Dorsolateral prefrontal cortex (tissue), 120 donors: ENCODE measurements at regions of chr1 and their contacts with region 1.

Region 1: GRCh38 chr1:180881806-180882509 is 30.7 kb upstream of the KIAA1614 start:
- DNase-seq: no peak
- H3K4me3 ChIP-seq: no peak overlapping the region
- H3K27ac ChIP-seq: peak overlapping the region in 40 of 59 donors; percentile 1 to 77 (median 47)
- H3K27me3 ChIP-seq: no peaks in the 10 kb centered on the region
- CTCF ChIP-seq: peak in 55 of 56 donors; percentile 53 to 89 (median 71)

Region 2: GRCh38 chr1:180849036-180849775 is 32.8 kb before region 1 on chr1:
- intact Hi-C with region 1: no loop called
- DNase-seq: no peak
- H3K4me3 ChIP-seq: no peak overlapping the region
- H3K27ac ChIP-seq: no peak overlapping the region
- H3K27me3 ChIP-seq: no peaks in the 10 kb centered on the region
- CTCF ChIP-seq: no peak

Region 3: DNA sequence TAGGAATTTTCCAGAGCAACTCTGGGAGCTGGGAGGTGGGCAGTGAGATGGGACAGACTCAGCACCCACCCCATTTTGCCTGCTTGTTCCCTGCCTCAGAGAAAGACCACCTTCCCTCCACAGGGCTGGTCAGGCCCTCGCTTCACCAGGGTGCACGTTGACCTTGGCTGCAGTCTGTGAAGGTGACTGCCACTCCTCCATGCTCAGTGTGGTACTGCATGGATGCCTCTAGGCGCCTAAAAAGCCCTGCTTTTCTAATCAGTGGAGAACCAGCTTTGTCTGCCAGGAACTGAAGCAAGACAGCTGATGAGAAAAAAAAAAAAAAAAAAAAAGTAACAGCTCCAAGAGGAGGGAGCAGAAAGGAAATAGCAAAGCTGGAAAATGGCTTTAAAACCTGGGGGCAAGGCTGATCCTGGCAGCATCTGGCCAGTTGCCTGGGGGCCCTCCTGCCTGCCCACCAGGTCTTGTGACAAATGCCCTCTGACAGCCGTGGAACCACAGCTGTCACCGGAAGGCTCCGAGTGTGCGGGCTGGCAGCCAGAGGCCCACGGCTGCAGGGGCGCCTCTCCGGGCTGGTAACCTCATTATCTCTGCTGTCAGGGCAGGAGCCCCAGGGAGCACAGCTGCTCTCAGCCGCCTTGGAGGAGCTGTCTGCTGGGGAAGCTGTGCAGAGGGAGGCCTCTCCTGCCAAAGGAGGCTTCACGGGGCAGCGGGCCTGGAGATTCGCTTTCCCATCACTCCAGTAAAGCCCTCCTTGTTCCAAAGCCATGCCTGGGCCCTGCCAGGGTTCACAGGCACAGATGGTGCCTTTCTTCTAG is 44.4 kb after region 1 on chr1:
- intact Hi-C with region 1: loop called in 1 of 2 experiments (anchors 2 kb)
- DNase-seq: peak; percentile 51 to 83 (median 70)
- H3K4me3 ChIP-seq: peak overlapping the region in 39 of 59 donors; percentile 0 to 47 (median 24)
- H3K27ac ChIP-seq: peak overlapping the region; percentile 86 to 99 (median 97)
- H3K27me3 ChIP-seq: no peaks in the 10 kb centered on the region
- CTCF ChIP-seq: peak in 7 of 56 donors; percentile 8 to 29 (median 14)

Region 4: DNA sequence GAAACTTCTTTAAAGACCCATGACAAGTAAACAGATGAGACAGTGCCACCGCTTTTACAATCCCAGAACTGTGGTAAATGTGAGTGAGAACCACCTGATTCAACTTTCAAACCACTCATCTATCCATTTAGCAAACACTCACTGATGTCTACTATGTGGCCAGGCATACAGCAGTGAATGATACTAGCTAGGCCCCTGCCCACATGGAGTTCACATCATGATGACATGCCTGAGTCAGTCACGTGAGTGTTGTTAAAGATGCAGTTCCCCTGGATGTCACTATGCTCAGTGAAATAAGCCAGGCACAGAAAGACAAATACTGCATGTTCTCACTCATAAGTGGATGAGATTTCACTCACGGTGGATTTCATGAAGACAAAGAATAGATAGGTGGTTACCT is 112.3 kb after region 1 on chr1:
- intact Hi-C with region 1: no loop called
- DNase-seq: no peak
- H3K4me3 ChIP-seq: no peak overlapping the region
- H3K27ac ChIP-seq: peak overlapping the region in 1 of 59 donors; percentile 3
- H3K27me3 ChIP-seq: no peaks in the 10 kb centered on the region
- CTCF ChIP-seq: no peak

Region 5: GRCh38 chr1:181021811-181022434 is 140.0 kb after region 1 on chr1:
- intact Hi-C with region 1: loop called (anchors 5 kb)
- DNase-seq: peak in 9 of 10 donors; percentile 38 to 73 (median 53)
- H3K4me3 ChIP-seq: peak overlapping the region; percentile 74 to 100 (median 93)
- H3K27ac ChIP-seq: peak overlapping the region; percentile 63 to 96 (median 89)
- H3K27me3 ChIP-seq: no peaks in the 10 kb centered on the region
- CTCF ChIP-seq: peak in 1 of 56 donors; percentile 7

Region 6: DNA sequence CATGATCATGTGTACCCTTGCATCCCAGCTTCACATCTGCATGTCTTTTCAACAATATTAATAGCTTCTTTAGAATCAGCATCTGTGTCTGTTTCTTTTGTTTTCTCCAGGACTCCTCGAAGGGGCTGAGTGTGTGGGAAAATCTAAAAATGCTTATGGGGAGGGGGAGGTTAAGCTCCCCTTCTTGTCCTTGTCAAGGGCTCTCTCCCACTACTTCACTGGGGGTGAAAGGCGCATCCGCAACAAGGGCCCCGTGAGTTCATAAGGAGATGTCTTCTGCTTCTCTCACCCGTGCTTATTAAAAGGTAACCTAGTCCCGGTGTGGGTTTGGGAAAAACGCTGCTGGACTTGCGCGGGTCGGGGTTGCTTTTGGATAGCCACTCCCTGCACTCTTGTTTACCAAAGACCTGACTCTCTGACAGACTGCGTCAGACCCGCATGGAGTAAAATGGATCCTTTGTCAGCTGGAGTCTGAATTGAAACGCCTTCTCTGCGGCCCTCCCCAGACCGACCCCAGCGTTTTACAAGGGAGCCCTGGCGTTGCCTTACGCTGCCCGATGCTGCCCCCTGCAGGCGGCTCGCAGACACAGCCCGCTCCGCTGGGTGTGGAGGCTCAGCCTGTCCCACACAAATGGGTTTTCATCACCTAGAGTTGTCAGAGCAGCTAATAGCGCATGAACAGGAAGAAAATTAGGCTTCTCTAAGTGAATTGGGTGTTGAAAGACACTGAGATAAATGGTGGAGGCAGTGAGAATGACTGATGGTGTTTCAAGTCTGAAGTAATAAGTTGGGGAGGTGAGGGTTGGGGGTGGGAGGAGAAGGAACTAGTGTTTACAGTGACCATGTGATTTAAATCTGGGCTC is 260.4 kb after region 1 on chr1:
- intact Hi-C with region 1: loop called (anchors 1 to 2 kb)
- DNase-seq: peak; percentile 88 to 95 (median 94)
- H3K4me3 ChIP-seq: peak overlapping the region; percentile 12 to 69 (median 47)
- H3K27ac ChIP-seq: peak overlapping the region in 58 of 59 donors; percentile 17 to 93 (median 77)
- H3K27me3 ChIP-seq: no peaks in the 10 kb centered on the region
- CTCF ChIP-seq: peak; percentile 92 to 100 (median 98)

Region 7: GRCh38 chr1:181166377-181167196 is 284.6 kb after region 1 on chr1:
- intact Hi-C with region 1: loop called (anchors 2 to 5 kb)
- DNase-seq: peak in 8 of 10 donors; percentile 57 to 87 (median 65)
- H3K4me3 ChIP-seq: peak overlapping the region in 3 of 59 donors; percentile 3 to 22 (median 21)
- H3K27ac ChIP-seq: peak overlapping the region in 1 of 59 donors; percentile 13
- H3K27me3 ChIP-seq: no peaks in the 10 kb centered on the region
- CTCF ChIP-seq: peak; percentile 54 to 94 (median 87)

Region 8: GRCh38 chr1:181424786-181425403 is 542.9 kb after region 1 on chr1:
- intact Hi-C with region 1: loop called in 1 of 2 experiments (anchors 10 kb)
- DNase-seq: peak; percentile 60 to 85 (median 75)
- H3K4me3 ChIP-seq: peak overlapping the region in 20 of 59 donors; percentile 11 to 46 (median 32)
- H3K27ac ChIP-seq: peak overlapping the region in 1 of 59 donors; percentile 31
- H3K27me3 ChIP-seq: peaks cover 0 to 6% (median 0%) of the 10 kb centered on the region in 45 donors
- CTCF ChIP-seq: peak; percentile 97 to 100 (median 99)